ENCODE measurements at regions of chrX and their contacts with region 1.

Region 1: GRCh38 chrX:15107367-15107988 is 162.4 kb downstream of the ASB9 start:
- DNase-seq: peak; percentile 55
- H3K4me3 Mint-ChIP-seq: no peak overlapping the region
- H3K27ac Mint-ChIP-seq: no peak overlapping the region
- H3K4me1 Mint-ChIP-seq: peaks cover 5% of the 10 kb centered on the region
- H3K27me3 Mint-ChIP-seq: peaks cover 4% of the 10 kb centered on the region

Region 2: DNA sequence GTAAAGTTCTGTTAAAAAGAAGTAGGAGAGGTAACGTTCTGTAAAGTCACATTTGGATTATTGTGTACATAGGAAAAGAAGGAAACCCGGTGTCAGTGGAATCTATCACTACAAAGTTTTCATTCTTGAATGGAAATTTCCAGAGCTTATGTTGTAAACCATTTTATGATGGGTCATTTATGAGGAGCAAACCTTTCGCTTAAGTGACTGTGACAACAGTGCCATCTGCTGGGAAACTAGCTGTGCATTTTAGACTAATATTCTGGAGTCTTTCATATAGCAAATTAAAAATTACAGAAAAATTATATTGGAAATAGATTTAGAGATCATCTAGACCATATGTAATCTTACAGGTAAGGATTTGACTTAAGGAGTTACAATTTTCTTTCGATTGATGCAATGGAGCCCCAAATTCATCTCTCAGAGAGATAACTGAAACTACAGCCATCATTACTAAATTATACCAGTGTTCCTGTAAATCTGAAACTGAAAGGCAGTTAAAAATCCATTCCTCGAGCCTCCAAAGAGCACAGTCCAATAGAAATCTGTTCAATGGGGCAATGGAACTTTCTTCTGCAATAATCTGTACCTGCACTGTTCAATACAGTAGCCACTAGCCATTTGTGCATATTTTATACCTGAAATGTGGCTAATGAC is 135.5 kb after region 1 on chrX:
- intact Hi-C with region 1: loop called (anchors 1 kb)
- DNase-seq: peak; percentile 80
- H3K4me3 Mint-ChIP-seq: no peak overlapping the region
- H3K27ac Mint-ChIP-seq: no peak overlapping the region
- H3K4me1 Mint-ChIP-seq: no peaks in the 10 kb centered on the region
- H3K27me3 Mint-ChIP-seq: no peaks in the 10 kb centered on the region